Naive thymus-derived CD4-positive, alpha-beta T cell (primary cell): ENCODE measurements at regions of chr20 and their contacts with region 1.

Region 1: GRCh38 chr20:5056801-5057599 is 55.7 kb upstream of the SLC23A2 start:
- DNase-seq: peak; percentile 28 to 78 (median 62)
- ATAC-seq: peak; percentile 98
- H3K4me3 ChIP-seq: no peak overlapping the region
- H3K4me3 Mint-ChIP-seq: peak overlapping the region; percentile 26 to 73 (median 56)
- H3K27ac ChIP-seq: no peak overlapping the region
- H3K27ac Mint-ChIP-seq: peak overlapping the region; percentile 48 to 92 (median 84)
- H3K4me1 ChIP-seq: peaks cover 15 to 16% of the 10 kb centered on the region in 2 donors
- H3K4me1 Mint-ChIP-seq: peaks cover 16 to 30% (median 24%) of the 10 kb centered on the region in 7 donors
- H3K27me3 ChIP-seq: no peaks in the 10 kb centered on the region
- H3K27me3 Mint-ChIP-seq: peaks cover 0 to 11% (median 0%) of the 10 kb centered on the region in 5 donors

Region 2: DNA sequence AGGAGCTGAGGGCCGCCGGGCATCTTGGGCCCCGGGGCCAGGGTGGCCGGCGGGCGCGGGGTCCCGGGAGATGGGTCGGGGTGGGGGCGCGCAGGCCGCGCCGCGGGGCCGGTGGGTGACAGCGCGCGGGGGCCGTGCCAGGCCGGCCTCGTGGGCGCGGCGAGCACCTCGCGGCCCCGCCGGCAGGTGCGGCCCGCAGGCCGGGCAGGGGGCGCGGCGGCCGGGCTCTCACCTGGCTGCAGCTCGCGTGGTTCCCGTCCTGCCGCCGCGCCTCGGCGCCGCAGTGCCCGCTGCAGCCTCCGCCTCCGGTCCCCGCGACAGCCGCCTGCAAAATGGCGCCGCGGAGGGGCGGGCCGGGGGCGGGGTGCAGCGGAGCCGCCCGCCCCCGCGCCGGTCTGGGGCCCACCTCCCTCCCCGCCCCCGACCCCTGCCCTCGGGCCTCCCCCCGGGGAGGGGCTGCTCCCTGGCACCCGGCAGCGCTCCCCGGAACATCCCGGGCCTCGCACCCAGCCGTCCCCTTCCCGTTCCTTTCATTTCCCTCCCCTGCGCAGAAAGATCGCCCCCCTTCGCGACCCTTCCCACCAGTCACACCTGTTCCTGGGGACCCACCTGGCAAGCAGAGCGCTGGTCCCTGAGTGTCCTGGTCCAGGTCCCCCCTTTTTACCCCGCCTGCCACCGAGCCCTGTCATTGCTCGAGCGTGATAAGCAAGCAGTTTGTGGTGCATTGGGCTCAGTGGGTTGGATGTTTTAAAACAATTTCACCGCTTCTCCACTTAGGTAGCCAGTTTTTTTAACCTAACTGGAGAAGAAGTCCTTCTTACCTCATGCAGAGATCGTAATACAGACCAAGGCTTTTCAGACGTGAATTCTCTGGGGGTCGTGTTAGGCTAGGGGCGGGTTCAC is 55.6 kb before region 1 on chr20 and contains the start of gene SLC23A2:
- CTCF ChIA-PET with region 1: no interaction called
- POLR2A ChIA-PET with region 1: interaction called, 6 read pairs
- intact Hi-C with region 1: loop called (anchors 1 to 2 kb)
- DNase-seq: peak; percentile 39 to 72 (median 55)
- ATAC-seq: peak; percentile 93
- H3K4me3 ChIP-seq: peak within 1 kb of the TSS; percentile 93
- H3K4me3 Mint-ChIP-seq: peak within 1 kb of the TSS; percentile 89 to 99 (median 92)
- H3K27ac ChIP-seq: peak within 1 kb of the TSS; percentile 75
- H3K27ac Mint-ChIP-seq: peak within 1 kb of the TSS; percentile 84 to 97 (median 87)
- H3K4me1 ChIP-seq: peaks cover 14 to 17% of the 10 kb centered on the region in 2 donors
- H3K4me1 Mint-ChIP-seq: peaks cover 33 to 48% (median 36%) of the 10 kb centered on the region in 7 donors
- H3K27me3 ChIP-seq: no peaks in the 10 kb centered on the region
- H3K27me3 Mint-ChIP-seq: peaks cover 0 to 15% (median 0%) of the 10 kb centered on the region in 5 donors
- total RNA-seq, gene SLC23A2: 19.2 to 32.4 (median 29.6) TPM

Region 3: DNA sequence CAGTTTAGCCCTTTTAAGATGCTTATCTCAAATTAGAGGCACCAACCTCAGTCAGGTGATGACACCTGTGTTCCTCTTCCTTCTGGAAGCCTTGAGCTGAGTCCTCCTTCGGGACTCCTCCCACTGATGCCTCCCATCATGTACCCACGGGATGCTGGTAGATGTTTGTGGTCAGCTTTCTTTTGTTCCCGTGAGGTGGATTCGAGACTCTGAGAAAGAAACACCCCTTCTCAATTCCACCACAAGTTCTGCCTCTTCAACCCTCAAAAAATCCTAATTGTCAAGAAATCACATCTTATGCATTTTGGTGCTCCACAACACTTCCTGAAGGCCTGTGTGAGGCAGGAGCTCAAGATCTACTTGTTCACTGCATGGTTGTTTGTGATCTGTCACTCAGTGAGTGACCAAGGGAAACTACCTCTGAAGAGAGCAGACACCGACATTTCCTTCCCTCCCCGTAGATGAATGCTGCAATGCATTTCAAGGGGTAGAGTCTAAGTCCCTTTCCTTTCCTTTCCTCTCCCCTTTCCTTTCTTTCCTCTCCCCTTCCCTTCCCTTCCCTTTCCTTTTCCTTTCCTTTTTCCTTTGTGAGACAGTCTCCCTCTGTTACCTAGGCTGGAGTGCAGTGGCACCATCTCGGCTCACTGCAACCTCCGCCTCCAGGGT is 12.3 kb after region 1 on chr20:
- CTCF ChIA-PET with region 1: no interaction called
- POLR2A ChIA-PET with region 1: no interaction called
- intact Hi-C with region 1: loop called in 1 of 2 experiments (anchors 1 kb)
- DNase-seq: no peak
- ATAC-seq: no peak
- H3K4me3 ChIP-seq: no peak overlapping the region
- H3K4me3 Mint-ChIP-seq: peak overlapping the region in 1 of 10 donors; percentile 66
- H3K27ac ChIP-seq: no peak overlapping the region
- H3K27ac Mint-ChIP-seq: peak overlapping the region in 1 of 9 donors; percentile 72
- H3K4me1 ChIP-seq: no peaks in the 10 kb centered on the region
- H3K4me1 Mint-ChIP-seq: peaks cover 0 to 42% (median 4%) of the 10 kb centered on the region in 7 donors
- H3K27me3 ChIP-seq: no peaks in the 10 kb centered on the region
- H3K27me3 Mint-ChIP-seq: no peaks in the 10 kb centered on the region

Region 4: GRCh38 chr20:5078399-5078958 is 21.5 kb after region 1 on chr20:
- CTCF ChIA-PET with region 1: interaction called, 8 read pairs
- POLR2A ChIA-PET with region 1: interaction called, 6 read pairs
- intact Hi-C with region 1: loop called (anchors 1 kb)
- DNase-seq: peak; percentile 39 to 78 (median 74)
- ATAC-seq: peak; percentile 95
- H3K4me3 ChIP-seq: peak overlapping the region; percentile 33
- H3K4me3 Mint-ChIP-seq: peak overlapping the region; percentile 61 to 92 (median 89)
- H3K27ac ChIP-seq: peak overlapping the region; percentile 79
- H3K27ac Mint-ChIP-seq: peak overlapping the region; percentile 97 to 100 (median 99)
- H3K4me1 ChIP-seq: peaks cover 16 to 25% of the 10 kb centered on the region in 2 donors
- H3K4me1 Mint-ChIP-seq: peaks cover 24 to 54% (median 32%) of the 10 kb centered on the region in 7 donors
- H3K27me3 ChIP-seq: no peaks in the 10 kb centered on the region
- H3K27me3 Mint-ChIP-seq: no peaks in the 10 kb centered on the region

Region 5: DNA sequence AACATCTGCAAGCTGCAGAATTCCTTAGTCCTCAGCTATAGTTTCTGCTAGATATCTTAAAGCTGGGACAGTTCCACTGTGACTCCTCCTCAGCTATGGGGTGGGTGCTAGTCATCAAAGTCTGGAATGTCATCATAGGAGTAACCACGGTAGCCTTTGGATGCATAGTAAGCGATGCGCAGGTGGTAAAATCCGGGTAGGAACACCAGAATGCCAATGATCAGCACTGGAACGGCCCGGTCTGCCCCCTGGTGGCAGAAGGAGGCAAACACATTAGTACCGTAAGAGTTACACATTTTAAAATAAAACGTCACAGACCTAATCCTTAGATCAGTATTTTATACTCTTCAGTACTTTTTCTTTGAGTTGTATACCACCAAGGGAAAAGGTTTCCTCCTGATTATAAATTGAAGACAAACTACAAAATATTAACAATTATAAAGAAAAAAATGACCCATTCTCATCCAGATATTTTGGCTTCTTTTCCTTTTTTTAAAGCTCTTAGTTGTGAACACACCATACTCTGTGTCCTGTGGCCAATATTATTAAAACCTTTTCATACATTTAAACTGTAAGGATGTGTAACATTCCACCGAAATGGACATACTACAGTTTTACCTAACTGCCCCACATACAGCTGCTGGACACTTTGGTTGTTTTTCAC is 43.8 kb after region 1 on chr20:
- CTCF ChIA-PET with region 1: interaction called, 42 read pairs
- POLR2A ChIA-PET with region 1: no interaction called
- intact Hi-C with region 1: loop called (anchors 1 kb)
- DNase-seq: peak; percentile 51 to 77 (median 67)
- ATAC-seq: peak; percentile 97
- H3K4me3 ChIP-seq: no peak overlapping the region
- H3K4me3 Mint-ChIP-seq: no peak overlapping the region
- H3K27ac ChIP-seq: peak overlapping the region; percentile 43
- H3K27ac Mint-ChIP-seq: peak overlapping the region; percentile 44 to 78 (median 69)
- H3K4me1 ChIP-seq: peaks cover 3 to 9% of the 10 kb centered on the region in 2 donors
- H3K4me1 Mint-ChIP-seq: peaks cover 5 to 20% (median 12%) of the 10 kb centered on the region in 7 donors
- H3K27me3 ChIP-seq: no peaks in the 10 kb centered on the region
- H3K27me3 Mint-ChIP-seq: no peaks in the 10 kb centered on the region

Region 6: DNA sequence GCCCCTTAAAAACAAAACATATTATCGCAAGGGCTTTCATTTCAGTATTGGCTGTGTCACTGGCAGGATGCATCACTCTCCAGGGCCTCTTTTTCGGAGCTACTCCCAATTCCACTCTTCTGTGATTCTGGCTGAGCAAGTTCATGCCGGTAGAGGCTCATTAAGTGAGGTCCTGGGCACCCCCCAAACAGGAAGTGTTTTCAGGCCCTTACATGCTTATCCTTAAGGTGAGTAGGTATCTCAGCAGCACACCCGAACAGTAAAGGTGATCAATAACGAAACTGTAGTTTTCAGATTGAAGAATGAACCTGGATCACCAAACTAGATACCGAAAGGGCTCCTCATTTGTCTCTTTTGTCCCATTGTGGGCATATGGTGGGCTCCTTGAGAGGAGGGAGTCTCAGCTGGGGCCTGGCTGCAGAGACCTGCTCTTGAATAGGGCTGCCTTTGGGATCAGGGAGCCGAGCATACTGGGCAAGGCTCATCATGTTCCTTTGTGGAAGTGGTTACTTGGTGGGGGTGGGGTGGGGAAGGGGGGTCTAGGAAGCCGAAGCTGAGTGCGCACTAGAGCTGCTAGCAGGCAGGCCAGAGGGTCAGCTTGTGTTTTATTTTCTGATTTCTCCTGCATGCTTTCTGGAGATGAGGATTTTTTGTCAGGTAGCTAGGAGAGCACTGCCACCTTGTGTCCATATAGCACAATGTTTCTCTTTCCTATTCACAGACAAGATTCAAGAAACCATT is 135.0 kb after region 1 on chr20:
- CTCF ChIA-PET with region 1: no interaction called
- POLR2A ChIA-PET with region 1: no interaction called
- intact Hi-C with region 1: loop called (anchors 1 to 2 kb)
- DNase-seq: peak in 7 of 9 donors; percentile 36 to 66 (median 54)
- ATAC-seq: peak; percentile 89
- H3K4me3 ChIP-seq: no peak overlapping the region
- H3K4me3 Mint-ChIP-seq: no peak overlapping the region
- H3K27ac ChIP-seq: peak overlapping the region; percentile 40
- H3K27ac Mint-ChIP-seq: peak overlapping the region in 8 of 9 donors; percentile 2 to 93 (median 80)
- H3K4me1 ChIP-seq: no peaks in the 10 kb centered on the region
- H3K4me1 Mint-ChIP-seq: peaks cover 0 to 18% (median 0%) of the 10 kb centered on the region in 7 donors
- H3K27me3 ChIP-seq: no peaks in the 10 kb centered on the region
- H3K27me3 Mint-ChIP-seq: no peaks in the 10 kb centered on the region